ENCODE measurements at regions of chr11 and their contacts with region 1.

Region 1: DNA sequence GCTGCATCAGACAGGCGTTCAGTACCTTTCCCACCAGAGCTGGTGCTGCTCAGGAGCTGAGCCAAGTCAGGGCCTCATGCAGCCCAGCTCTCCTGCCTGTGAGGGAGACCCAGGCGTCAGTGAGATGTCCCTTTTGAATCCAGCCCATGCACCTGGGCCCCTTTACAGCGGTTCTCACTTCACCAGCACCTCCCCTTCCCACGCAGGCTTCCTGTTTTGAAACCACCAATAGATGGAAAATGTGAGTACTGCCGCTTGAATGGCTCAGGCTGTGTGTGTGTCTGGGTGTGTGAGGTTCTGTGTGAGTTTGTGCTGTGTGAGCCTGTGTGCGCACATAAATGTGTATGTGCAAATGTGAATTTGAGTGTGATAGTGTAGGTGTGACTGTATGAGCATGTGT is 88.4 kb downstream of the UBASH3B start:
- DNase-seq: peak; percentile 51
- ATAC-seq: peak; percentile 51
- H3K4me3 Mint-ChIP-seq: no peak overlapping the region
- H3K27ac Mint-ChIP-seq: no peak overlapping the region
- H3K4me1 Mint-ChIP-seq: peaks cover 12% of the 10 kb centered on the region
- H3K27me3 Mint-ChIP-seq: no peaks in the 10 kb centered on the region
- CTCF ChIP-seq: no peak

Region 2: DNA sequence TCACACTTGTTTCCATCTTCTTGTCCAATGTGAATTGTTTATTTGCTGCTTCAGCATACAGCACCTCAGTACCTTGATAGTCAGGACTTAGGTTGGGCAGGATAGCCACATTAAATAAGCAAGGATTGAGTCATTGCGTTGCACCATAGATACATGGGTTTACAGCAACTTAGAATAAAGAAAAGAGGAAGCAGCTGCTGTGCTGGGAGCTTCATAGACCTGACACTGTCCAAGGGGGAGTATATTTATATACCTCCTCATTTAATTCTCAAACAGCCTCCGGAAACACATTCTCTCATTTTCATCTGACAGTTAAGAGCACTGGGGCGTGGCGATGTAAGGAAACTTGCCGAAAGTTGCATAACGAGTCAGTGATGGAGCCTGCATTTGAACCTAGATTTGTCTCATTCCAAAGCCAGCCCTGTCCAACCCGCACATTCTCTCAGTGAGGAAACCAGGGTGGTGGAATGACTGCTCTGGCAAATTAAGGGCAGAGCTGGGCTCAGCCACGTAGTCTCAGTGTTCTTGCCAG is 46.2 kb before region 1 on chr11:
- CTCF ChIA-PET with region 1: no interaction called
- POLR2A ChIA-PET with region 1: interaction called, 6 read pairs
- intact Hi-C with region 1: loop called (anchors 1 kb)
- DNase-seq: no peak
- ATAC-seq: peak; percentile 91
- H3K4me3 Mint-ChIP-seq: peak overlapping the region; percentile 56
- H3K27ac Mint-ChIP-seq: peak overlapping the region; percentile 65
- H3K4me1 Mint-ChIP-seq: peaks cover 74% of the 10 kb centered on the region
- H3K27me3 Mint-ChIP-seq: no peaks in the 10 kb centered on the region
- CTCF ChIP-seq: no peak

Region 3: GRCh38 chr11:122717264-122717867 is 26.6 kb before region 1 on chr11:
- CTCF ChIA-PET with region 1: no interaction called
- POLR2A ChIA-PET with region 1: interaction called, 16 read pairs
- intact Hi-C with region 1: loop called (anchors 1 kb)
- DNase-seq: peak; percentile 38
- ATAC-seq: peak; percentile 69
- H3K4me3 Mint-ChIP-seq: peak overlapping the region; percentile 47
- H3K27ac Mint-ChIP-seq: peak overlapping the region; percentile 80
- H3K4me1 Mint-ChIP-seq: peaks cover 83% of the 10 kb centered on the region
- H3K27me3 Mint-ChIP-seq: peaks cover 2% of the 10 kb centered on the region
- CTCF ChIP-seq: no peak

Region 4: GRCh38 chr11:122727101-122727929 is 16.6 kb before region 1 on chr11:
- CTCF ChIA-PET with region 1: interaction called, 3 read pairs
- POLR2A ChIA-PET with region 1: interaction called, 11 read pairs
- intact Hi-C with region 1: loop called (anchors 1 kb)
- DNase-seq: no peak
- ATAC-seq: peak; percentile 57
- H3K4me3 Mint-ChIP-seq: peak overlapping the region; percentile 81
- H3K27ac Mint-ChIP-seq: peak overlapping the region; percentile 59
- H3K4me1 Mint-ChIP-seq: peaks cover 46% of the 10 kb centered on the region
- H3K27me3 Mint-ChIP-seq: peaks cover 7% of the 10 kb centered on the region
- CTCF ChIP-seq: no peak

Measured in activated B cell treated with CpG ODN at 0.5 μM for 24 hours (primary cell).